SK-N-SH (cell line): ENCODE measurements at regions of chr11 and their contacts with region 1.

Region 1: GRCh38 chr11:68370211-68371111 is 58.1 kb downstream of the LRP5 start:
- DNase-seq: peak; percentile 69
- H3K4me3 ChIP-seq: no peak overlapping the region
- H3K27ac ChIP-seq: peak overlapping the region in 1 of 2 experiments; percentile 100; a peak in 2 of 4 replicates
- H3K4me1 ChIP-seq: peaks cover 23 to 62% of the 10 kb centered on the region in 2 experiments
- H3K27me3 ChIP-seq: no peaks in the 10 kb centered on the region
- CTCF ChIP-seq: no peak
- EP300 ChIP-seq: no peak
- RAD21 ChIP-seq: no peak; the same call in 1 of the 2 replicates

Region 2: GRCh38 chr11:68271781-68272608 is 98.5 kb before region 1 on chr11 and contains the start of gene C11orf24:
- CTCF ChIA-PET with region 1: interaction called, 4 read pairs
- POLR2A ChIA-PET with region 1: interaction called, 16 read pairs
- DNase-seq: peak; percentile 100
- H3K4me3 ChIP-seq: peak within 1 kb of the TSS; percentile 67 to 75
- H3K27ac ChIP-seq: peak within 1 kb of the TSS; percentile 87 to 94
- H3K4me1 ChIP-seq: peaks cover 14 to 17% of the 10 kb centered on the region in 2 experiments; a peak in 3 of 4 replicates
- H3K27me3 ChIP-seq: no peaks in the 10 kb centered on the region
- CTCF ChIP-seq: no peak
- EP300 ChIP-seq: peak in 1 of 2 experiments; percentile 34; a peak in 2 of 4 replicates
- RAD21 ChIP-seq: no peak
- polyA plus RNA-seq, gene C11orf24: 50.9 and 52.1 TPM in 2 replicates

Region 3: DNA sequence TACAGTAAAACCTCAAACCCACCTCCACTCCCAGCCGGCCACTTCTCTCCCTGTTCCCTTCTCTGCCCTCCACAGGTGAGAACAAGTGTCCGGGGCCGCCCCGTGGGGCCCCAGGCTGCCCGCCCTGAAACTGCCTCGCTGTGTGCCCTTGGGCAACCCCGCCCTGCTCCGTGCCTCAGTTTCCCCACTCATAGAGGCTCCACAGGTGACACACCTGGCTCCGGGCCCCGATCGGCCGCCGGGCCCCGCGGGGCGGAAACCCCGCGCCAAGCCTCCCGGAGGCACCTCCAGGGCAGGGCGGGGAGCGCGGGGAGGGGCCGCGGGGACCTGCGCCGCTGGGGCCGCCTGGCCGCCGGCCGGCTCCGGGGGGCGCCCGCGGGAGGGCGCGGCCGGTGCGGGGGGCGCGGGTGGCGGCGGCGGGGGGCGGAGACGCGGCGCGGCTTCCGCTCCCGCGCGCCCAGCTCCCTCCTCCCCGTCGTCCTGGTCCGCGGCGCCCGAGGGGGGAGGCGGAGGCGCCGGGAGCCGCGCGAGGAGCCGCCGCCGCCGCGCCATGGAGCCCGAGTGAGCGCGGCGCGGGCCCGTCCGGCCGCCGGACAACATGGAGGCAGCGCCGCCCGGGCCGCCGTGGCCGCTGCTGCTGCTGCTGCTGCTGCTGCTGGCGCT is 58.2 kb before region 1 on chr11 and contains the start of gene LRP5:
- CTCF ChIA-PET with region 1: interaction called, 5 read pairs
- POLR2A ChIA-PET with region 1: interaction called, 15 read pairs
- DNase-seq: peak; percentile 94
- H3K4me3 ChIP-seq: peak within 1 kb of the TSS; percentile 67 to 75
- H3K27ac ChIP-seq: peak within 1 kb of the TSS; percentile 63 to 79; a peak in 3 of 4 replicates
- H3K4me1 ChIP-seq: peaks cover 19 to 28% of the 10 kb centered on the region in 2 experiments; a peak in 2 of 4 replicates
- H3K27me3 ChIP-seq: no peaks in the 10 kb centered on the region
- CTCF ChIP-seq: no peak
- EP300 ChIP-seq: no peak
- RAD21 ChIP-seq: no peak
- polyA plus RNA-seq, gene LRP5: 10.2 and 15.0 TPM in 2 replicates

Region 4: GRCh38 chr11:68329978-68330699 is 40.3 kb before region 1 on chr11:
- CTCF ChIA-PET with region 1: interaction called, 5 read pairs
- POLR2A ChIA-PET with region 1: interaction called, 12 read pairs
- DNase-seq: peak; percentile 83
- H3K4me3 ChIP-seq: no peak overlapping the region
- H3K27ac ChIP-seq: peak overlapping the region in 1 of 2 experiments; percentile 90; a peak in 2 of 4 replicates
- H3K4me1 ChIP-seq: peaks cover 10 to 65% of the 10 kb centered on the region in 2 experiments; a peak in 3 of 4 replicates
- H3K27me3 ChIP-seq: no peaks in the 10 kb centered on the region
- CTCF ChIP-seq: no peak
- EP300 ChIP-seq: peak in 1 of 2 experiments; percentile 5; a peak in 1 of 4 replicates
- RAD21 ChIP-seq: no peak; the same call in 1 of the 2 replicates

Region 5: GRCh38 chr11:68342459-68343158 is 27.9 kb before region 1 on chr11:
- CTCF ChIA-PET with region 1: no interaction called
- POLR2A ChIA-PET with region 1: interaction called, 11 read pairs
- DNase-seq: peak; percentile 47
- H3K4me3 ChIP-seq: no peak overlapping the region
- H3K27ac ChIP-seq: peak overlapping the region in 1 of 2 experiments; percentile 60; a peak in 2 of 4 replicates
- H3K4me1 ChIP-seq: peaks cover 26 to 40% of the 10 kb centered on the region in 2 experiments; a peak in 2 of 4 replicates
- H3K27me3 ChIP-seq: no peaks in the 10 kb centered on the region
- CTCF ChIP-seq: no peak
- EP300 ChIP-seq: no peak
- RAD21 ChIP-seq: no peak

Region 6: GRCh38 chr11:68383976-68384501 is 13.6 kb after region 1 on chr11:
- CTCF ChIA-PET with region 1: interaction called, 34 read pairs
- POLR2A ChIA-PET with region 1: interaction called, 3 read pairs
- DNase-seq: peak; percentile 87
- H3K4me3 ChIP-seq: peak overlapping the region in 1 of 2 experiments; percentile 33; a peak in 1 of 4 replicates
- H3K27ac ChIP-seq: no peak overlapping the region; a peak in 1 of 4 replicates
- H3K4me1 ChIP-seq: peaks cover 0 to 16% of the 10 kb centered on the region in 2 experiments; a peak in 1 of 4 replicates
- H3K27me3 ChIP-seq: no peaks in the 10 kb centered on the region
- CTCF ChIP-seq: peak; percentile 98
- EP300 ChIP-seq: no peak
- RAD21 ChIP-seq: peak; percentile 89

Region 7: GRCh38 chr11:68506908-68507307 is 136.4 kb after region 1 on chr11:
- CTCF ChIA-PET with region 1: no interaction called
- POLR2A ChIA-PET with region 1: no interaction called
- DNase-seq: no peak
- H3K4me3 ChIP-seq: no peak overlapping the region
- H3K27ac ChIP-seq: no peak overlapping the region
- H3K4me1 ChIP-seq: peaks cover 9 to 28% of the 10 kb centered on the region in 2 experiments
- H3K27me3 ChIP-seq: no peaks in the 10 kb centered on the region
- CTCF ChIP-seq: 0 out of 2 replicates have a peak, but pooled peaks have one; percentile 9
- EP300 ChIP-seq: no peak
- RAD21 ChIP-seq: no peak

Region 8: DNA sequence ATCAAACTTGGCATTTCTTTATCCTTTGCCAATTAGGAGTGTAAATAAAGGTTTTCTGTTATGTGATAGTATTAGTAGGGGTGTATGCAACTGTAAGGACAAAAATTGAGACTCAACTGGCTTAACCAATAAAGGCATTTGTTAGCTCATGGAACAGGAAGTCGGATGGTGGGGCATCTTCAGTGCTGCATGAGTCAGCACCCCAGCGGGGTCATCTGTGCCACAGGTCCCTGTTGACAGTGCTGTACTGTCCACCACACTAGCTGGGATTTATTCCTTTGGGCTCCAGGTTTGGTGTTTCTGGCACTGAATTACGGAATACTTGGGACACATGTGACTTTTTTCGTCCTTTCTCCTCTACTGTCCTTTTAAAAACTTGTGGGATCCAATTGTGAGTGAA is 176.1 kb after region 1 on chr11:
- CTCF ChIA-PET with region 1: no interaction called
- POLR2A ChIA-PET with region 1: no interaction called
- DNase-seq: no peak
- H3K4me3 ChIP-seq: no peak overlapping the region
- H3K27ac ChIP-seq: no peak overlapping the region; a peak in 1 of 4 replicates
- H3K4me1 ChIP-seq: peaks cover 17 to 30% of the 10 kb centered on the region in 2 experiments
- H3K27me3 ChIP-seq: no peaks in the 10 kb centered on the region
- CTCF ChIP-seq: no peak
- EP300 ChIP-seq: no peak
- RAD21 ChIP-seq: no peak